Posterior cingulate gyrus (tissue), 11 donors: ENCODE measurements at regions of chr14 and their contacts with region 1.

Region 1: DNA sequence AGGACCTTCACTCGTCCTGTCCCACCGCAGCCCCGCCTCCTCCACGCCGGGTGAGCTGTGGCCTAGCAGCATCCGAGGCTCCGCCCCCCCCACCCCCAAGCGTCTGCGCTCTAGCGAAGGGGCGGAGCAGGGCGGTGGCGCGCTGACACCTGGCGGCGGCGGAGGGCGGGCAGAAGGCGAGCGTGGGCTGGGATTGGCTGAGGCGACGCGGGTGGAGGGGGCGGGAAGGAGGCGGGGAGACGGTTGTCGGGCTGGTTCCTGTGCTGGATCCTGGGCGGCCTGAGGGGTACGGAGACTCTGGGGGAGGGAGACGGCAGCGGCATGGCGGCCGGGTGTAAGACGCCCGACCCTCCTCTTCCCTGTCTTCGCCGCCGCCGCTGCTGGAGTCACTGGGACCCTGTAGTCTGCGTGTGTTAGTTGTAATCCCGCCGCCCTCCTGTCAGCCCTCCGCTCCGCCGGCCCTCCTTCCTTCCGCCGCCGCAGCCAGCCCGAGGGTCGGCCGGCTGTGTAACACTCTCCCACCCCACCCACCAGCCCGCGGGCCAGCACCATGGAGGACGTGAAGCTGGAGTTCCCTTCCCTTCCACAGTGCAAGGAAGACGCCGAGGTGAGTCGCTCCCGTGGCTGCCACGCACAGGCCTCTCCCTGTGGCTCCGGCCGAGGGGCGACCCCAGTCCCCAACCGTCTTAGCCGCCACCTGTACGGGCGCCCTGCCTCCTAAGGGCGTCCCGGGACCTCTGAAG is at the start of gene STYX:
- DNase-seq: peak; percentile 92 to 99 (median 96)

Region 2: DNA sequence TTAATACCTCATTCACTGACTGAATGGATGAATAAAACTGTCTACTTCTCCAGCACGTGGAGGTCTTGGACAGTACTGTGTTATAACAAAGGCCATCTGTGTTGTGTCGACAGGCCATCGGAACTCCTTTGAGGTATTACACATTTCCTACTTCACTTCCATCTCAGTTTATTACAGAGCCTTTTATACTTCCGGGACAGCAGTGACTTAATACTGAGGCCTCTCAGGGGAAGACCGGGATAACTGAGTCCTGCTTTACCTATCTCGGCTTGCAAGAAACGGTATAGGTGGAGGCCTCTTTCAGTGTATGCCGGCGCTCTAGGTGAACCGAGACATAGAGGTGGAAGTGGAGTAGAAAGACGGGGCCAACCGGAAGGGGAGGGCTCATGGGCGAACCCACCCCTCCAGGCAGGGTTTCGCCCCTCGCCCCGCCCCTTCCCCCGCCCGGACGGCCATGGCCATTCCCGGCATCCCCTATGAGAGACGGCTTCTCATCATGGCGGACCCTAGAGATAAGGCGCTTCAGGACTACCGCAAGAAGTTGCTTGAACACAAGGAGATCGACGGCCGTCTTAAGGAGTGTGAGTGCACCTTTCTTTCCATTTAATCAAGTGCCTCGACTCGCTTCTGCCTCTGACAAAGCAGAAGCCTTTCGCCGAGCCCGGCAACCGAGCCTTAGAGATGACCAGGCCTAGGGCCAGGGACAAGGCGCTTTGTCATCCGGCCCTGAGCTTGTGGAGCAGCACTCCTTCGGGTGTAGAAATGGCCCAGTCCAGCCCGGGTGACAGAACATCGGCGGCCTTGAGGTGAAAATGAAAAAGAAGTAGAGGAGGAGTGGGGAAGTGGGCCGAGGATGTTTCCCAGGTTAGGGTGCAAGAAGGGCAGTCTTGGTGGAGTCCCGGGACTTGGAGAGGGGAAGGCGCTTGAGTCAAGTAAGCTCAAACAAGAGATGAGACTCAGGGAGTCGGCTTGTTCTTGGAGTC is 23.1 kb before region 1 on chr14 and contains the start of gene PSMC6:
- intact Hi-C with region 1: loop called (anchors 1 kb)
- DNase-seq: peak; percentile 90 to 99 (median 94)

Region 3: DNA sequence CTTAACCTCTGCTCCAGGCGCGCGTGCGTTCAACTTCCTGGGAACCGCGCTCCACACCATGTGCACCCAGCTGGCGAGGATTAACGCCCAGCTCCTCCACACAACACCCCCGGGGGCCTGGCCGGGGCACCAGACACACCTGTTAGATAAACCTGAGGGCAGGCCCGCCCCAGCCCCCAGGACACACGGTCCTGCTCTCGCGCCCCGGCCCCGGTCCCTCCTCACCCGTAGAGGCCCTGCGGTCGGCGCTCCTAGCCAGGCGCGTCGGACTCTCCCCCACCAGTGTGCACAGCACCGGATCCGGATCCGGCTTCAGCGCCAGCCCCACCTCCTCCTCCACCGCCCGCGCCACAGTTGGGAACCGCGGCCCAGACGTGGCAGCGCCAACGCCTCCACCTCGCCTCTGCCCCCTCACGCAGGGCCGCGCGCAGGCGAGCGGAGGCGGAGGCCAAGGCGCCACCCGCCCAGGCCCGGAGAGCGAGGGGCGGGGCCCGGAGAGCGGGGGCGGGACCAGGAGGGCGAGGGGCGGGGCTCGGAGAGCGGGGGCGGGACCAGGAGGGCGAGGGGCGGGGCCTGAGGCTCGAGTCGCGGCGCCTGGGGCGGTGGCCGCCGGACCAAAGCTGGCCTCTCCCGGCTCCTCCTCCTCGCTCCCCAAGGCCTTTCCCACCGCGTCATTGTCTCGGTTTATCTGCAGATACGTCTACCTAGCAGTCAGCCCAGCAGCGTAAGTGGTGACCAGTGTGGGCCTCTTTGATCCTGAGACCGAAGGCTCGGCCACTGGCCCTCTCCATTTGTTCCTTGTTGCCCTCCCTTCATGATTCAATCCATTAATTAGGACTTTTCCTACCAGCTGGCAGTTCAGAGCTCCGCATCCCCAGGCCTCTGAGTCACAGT is 61.4 kb after region 1 on chr14 and contains the start of gene GNPNAT1:
- intact Hi-C with region 1: loop called (anchors 5 kb)
- DNase-seq: peak; percentile 65 to 97 (median 76)